Natural killer cell (primary cell): ENCODE measurements at regions of chr14 and their contacts with region 1.

Region 1: GRCh38 chr14:89720741-89721315 is 233.7 kb downstream of the EFCAB11 start:
- DNase-seq: peak; percentile 66 to 93
- ATAC-seq: peak; percentile 74 to 93 (median 88)
- H3K4me3 ChIP-seq: no peak overlapping the region
- H3K4me3 Mint-ChIP-seq: peak overlapping the region; percentile 72
- H3K27ac ChIP-seq: peak overlapping the region; percentile 93
- H3K27ac Mint-ChIP-seq: peak overlapping the region; percentile 88 to 92
- H3K4me1 ChIP-seq: peaks cover 81% of the 10 kb centered on the region
- H3K4me1 Mint-ChIP-seq: peaks cover 75 to 83% of the 10 kb centered on the region in 2 donors
- H3K27me3 ChIP-seq: no peaks in the 10 kb centered on the region
- H3K27me3 Mint-ChIP-seq: no peaks in the 10 kb centered on the region
- CTCF ChIP-seq: no peak

Region 2: GRCh38 chr14:89466484-89466883 is 254.3 kb before region 1 on chr14:
- intact Hi-C with region 1: loop called (anchors 2 kb)
- DNase-seq: peak; percentile 68 to 76
- ATAC-seq: peak; percentile 96 to 100 (median 99)
- H3K4me3 ChIP-seq: no peak overlapping the region
- H3K4me3 Mint-ChIP-seq: peak overlapping the region; percentile 87
- H3K27ac ChIP-seq: peak overlapping the region; percentile 71
- H3K27ac Mint-ChIP-seq: peak overlapping the region; percentile 85 to 95
- H3K4me1 ChIP-seq: peaks cover 44% of the 10 kb centered on the region
- H3K4me1 Mint-ChIP-seq: peaks cover 67 to 81% of the 10 kb centered on the region in 2 donors
- H3K27me3 ChIP-seq: no peaks in the 10 kb centered on the region
- H3K27me3 Mint-ChIP-seq: no peaks in the 10 kb centered on the region
- CTCF ChIP-seq: no peak

Region 3: DNA sequence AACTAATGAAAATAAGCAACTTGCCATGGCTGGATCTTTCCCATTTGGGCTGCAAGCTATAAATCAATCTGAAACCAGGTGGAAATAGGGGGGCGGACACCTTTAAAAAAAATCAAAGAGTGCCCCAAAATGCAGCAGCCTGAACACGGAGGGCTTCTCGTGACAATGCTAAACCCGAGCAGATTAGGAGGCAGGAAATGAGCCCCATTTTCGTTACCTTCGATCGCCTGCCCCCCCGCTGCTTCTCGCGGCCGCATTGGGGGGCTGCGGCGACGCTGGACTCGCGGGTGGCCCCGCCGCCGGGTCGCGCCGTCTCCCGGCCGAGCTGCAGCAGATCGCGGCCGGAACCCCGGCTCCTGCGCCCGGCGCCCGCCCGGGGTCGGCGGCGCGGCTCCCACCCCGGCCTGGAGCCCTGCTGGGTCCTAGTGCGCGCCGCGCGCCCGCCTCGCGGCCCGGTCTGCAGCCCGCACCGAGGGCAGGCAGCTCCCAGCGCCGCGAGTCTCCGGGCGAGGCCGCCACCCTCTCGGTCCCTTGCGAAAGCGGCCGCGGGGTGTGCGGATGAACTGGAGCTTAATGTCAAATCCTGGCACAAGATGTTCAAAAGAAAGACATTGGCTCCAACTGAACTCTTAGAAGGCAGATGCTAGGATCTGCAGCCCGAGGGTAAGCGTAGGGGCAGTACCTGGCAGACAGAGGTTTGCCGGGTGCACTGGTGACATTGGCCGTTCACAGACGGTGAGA is 101.8 kb before region 1 on chr14:
- intact Hi-C with region 1: loop called (anchors 2 kb)
- DNase-seq: peak; percentile 70 to 84
- ATAC-seq: peak; percentile 38 to 71 (median 68)
- H3K4me3 ChIP-seq: peak overlapping the region; percentile 85
- H3K4me3 Mint-ChIP-seq: peak overlapping the region; percentile 97
- H3K27ac ChIP-seq: peak overlapping the region; percentile 96
- H3K27ac Mint-ChIP-seq: peak overlapping the region; percentile 90 to 98
- H3K4me1 ChIP-seq: peaks cover 24% of the 10 kb centered on the region
- H3K4me1 Mint-ChIP-seq: peaks cover 55 to 60% of the 10 kb centered on the region in 2 donors
- H3K27me3 ChIP-seq: no peaks in the 10 kb centered on the region
- H3K27me3 Mint-ChIP-seq: no peaks in the 10 kb centered on the region
- CTCF ChIP-seq: no peak

Region 4: DNA sequence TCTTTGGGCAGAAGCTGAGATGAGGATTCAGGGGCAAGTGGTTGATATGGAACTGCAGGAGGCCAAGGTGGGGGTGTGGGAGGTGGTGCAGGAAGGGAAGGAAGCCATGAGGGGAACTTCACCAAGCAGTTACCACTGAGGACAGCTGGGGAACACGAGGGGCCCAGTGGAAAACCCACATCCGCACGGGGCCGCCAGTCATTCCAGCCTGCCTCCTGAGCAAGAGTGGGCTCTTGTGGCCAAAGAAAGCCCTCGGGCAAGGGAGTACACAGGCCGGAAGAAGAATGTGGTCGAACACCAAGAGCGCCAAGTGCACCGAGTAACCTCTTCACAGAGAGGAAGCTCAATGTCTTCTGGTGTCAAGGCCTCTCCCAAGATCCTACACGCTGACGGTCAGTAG is 51.6 kb before region 1 on chr14:
- intact Hi-C with region 1: no loop called
- DNase-seq: peak; percentile 25 to 35
- ATAC-seq: peak; percentile 82 to 91 (median 87)
- H3K4me3 ChIP-seq: no peak overlapping the region
- H3K4me3 Mint-ChIP-seq: peak overlapping the region; percentile 66
- H3K27ac ChIP-seq: no peak overlapping the region
- H3K27ac Mint-ChIP-seq: peak overlapping the region; percentile 78 to 84
- H3K4me1 ChIP-seq: peaks cover 15% of the 10 kb centered on the region
- H3K4me1 Mint-ChIP-seq: peaks cover 22 to 24% of the 10 kb centered on the region in 2 donors
- H3K27me3 ChIP-seq: no peaks in the 10 kb centered on the region
- H3K27me3 Mint-ChIP-seq: no peaks in the 10 kb centered on the region
- CTCF ChIP-seq: no peak

Region 5: DNA sequence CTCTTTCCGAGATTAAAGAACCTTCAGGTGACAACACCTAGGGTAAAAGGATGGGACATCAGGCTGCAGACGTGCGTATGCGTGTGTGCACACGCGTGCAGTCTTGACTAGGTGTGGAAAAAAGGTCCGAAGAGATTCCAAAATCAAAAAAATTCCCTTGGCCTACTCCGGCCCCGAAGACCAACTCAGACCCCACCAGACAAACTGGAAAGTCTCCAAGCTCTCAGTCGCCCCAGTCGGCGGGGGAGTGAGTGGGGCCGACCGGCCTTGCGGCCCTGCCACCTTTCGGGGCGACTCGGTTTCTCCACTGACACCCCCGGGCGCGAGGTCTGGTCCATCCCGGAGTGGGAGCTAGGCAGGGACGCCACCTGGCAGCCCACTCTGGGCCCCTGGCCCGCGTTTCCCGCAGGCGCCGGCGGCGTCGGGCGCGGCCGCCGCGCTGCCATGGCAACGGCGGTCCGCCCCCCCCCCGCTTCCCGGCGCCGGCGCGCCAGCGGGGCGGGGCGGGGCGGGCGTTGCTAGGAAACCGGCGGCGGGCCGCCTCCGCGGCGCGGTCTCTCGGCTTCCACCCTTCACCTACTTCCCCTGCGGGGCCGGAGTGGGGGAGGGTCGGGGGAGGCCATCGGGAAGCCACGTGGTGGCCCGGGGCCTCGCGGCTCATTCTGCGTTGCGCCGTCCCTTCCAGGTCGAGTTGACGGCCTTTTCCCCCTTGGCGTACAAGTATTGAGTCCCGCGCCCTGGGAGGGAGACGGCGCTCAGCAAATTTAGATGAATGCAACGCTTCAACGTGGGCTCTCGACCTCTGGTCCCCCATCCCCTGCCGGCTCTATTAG is 19.4 kb before region 1 on chr14:
- intact Hi-C with region 1: loop called (anchors 1 kb)
- DNase-seq: peak; percentile 74 to 89
- ATAC-seq: peak; percentile 90 to 93 (median 92)
- H3K4me3 ChIP-seq: peak overlapping the region; percentile 45
- H3K4me3 Mint-ChIP-seq: peak overlapping the region; percentile 86
- H3K27ac ChIP-seq: peak overlapping the region; percentile 40
- H3K27ac Mint-ChIP-seq: peak overlapping the region; percentile 77 to 86
- H3K4me1 ChIP-seq: peaks cover 19% of the 10 kb centered on the region
- H3K4me1 Mint-ChIP-seq: peaks cover 35 to 40% of the 10 kb centered on the region in 2 donors
- H3K27me3 ChIP-seq: no peaks in the 10 kb centered on the region
- H3K27me3 Mint-ChIP-seq: no peaks in the 10 kb centered on the region
- CTCF ChIP-seq: no peak

Region 6: DNA sequence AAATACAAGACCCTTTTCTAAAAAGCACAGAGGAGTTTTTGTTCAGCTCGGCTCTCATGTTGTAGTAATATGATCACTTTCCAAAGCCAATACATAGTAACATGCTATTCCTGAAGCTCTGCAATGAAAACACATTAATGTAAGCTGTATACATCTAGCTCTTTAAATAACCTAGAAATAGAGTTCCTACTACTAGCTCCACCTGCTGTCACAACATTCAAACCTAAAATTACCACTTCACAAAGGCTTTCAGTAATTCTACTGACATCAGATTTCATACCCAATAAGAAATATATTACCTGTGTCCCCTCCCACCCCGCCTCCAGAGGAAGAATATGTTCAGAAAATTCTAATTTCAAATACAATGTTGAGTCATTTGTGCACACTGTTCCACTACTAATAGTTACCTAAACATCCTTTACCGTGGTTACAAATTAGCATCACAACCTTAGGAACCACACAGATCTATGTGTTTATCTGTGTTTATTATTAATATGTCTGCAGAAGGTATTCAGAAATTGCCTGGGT is 215.9 kb after region 1 on chr14:
- intact Hi-C with region 1: no loop called
- DNase-seq: no peak
- ATAC-seq: no peak
- H3K4me3 ChIP-seq: no peak overlapping the region
- H3K4me3 Mint-ChIP-seq: no peak overlapping the region
- H3K27ac ChIP-seq: no peak overlapping the region
- H3K27ac Mint-ChIP-seq: no peak overlapping the region
- H3K4me1 ChIP-seq: no peaks in the 10 kb centered on the region
- H3K4me1 Mint-ChIP-seq: no peaks in the 10 kb centered on the region
- H3K27me3 ChIP-seq: no peaks in the 10 kb centered on the region
- H3K27me3 Mint-ChIP-seq: no peaks in the 10 kb centered on the region
- CTCF ChIP-seq: no peak

Region 7: DNA sequence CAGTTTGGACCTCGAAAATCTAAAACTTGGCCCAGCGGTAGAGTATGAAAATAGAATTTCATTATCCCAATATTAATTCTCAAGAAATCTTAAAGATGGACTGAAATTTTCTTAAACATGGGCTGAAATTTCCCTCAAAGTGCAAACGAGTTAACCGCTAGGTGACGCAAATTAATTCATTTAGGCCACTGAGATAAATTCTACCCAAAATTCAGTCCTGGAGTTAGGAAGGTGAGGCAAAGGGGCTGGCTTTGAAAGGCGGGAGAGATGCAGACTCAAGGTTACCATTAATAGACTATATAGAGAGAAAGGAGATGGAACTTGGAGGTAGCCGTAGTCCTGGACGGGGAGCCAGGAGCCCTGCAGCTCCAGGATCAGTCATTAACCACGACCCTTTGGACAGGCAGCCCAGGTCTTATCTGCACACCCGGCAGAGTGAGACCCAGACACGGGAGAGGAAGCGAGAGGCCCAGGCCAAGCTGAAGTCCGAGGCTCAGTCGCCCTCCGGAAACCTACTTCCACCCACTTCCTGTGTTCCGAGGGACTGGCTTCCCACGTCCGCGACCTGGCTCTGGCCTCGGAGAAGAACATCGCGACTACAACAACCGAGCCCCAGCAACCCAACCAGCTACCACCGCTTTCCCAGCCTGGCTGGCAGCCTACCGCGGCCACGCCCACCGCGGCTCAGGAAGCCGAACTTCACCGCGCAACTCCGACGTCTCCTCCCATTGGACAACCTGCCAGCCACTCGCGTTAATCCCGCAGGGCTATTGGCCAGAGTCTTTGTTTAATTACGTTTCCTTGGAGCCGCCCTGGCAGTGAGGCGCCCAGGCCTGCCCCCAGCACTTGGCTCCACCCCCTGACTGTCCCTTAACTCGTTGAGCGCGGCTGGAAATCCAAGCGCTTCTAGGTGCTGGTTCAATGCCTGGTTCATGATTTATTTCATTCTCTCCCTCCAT is 233.5 kb after region 1 on chr14 and contains the start of gene EFCAB11:
- intact Hi-C with region 1: loop called (anchors 5 kb)
- DNase-seq: peak; percentile 93 to 98
- ATAC-seq: peak; percentile 77 to 92 (median 78)
- H3K4me3 ChIP-seq: peak within 1 kb of the TSS; percentile 59
- H3K4me3 Mint-ChIP-seq: peak within 1 kb of the TSS; percentile 99
- H3K27ac ChIP-seq: peak within 1 kb of the TSS; percentile 98
- H3K27ac Mint-ChIP-seq: peak within 1 kb of the TSS; percentile 97
- H3K4me1 ChIP-seq: peaks cover 24% of the 10 kb centered on the region
- H3K4me1 Mint-ChIP-seq: peaks cover 40 to 46% of the 10 kb centered on the region in 2 donors
- H3K27me3 ChIP-seq: no peaks in the 10 kb centered on the region
- H3K27me3 Mint-ChIP-seq: no peaks in the 10 kb centered on the region
- CTCF ChIP-seq: no peak
- total RNA-seq, gene EFCAB11: 3.9 to 5.2 (median 4.0) TPM